Calu3 (cell line): ENCODE measurements at regions of chr10 and their contacts with region 1.

Region 1: DNA sequence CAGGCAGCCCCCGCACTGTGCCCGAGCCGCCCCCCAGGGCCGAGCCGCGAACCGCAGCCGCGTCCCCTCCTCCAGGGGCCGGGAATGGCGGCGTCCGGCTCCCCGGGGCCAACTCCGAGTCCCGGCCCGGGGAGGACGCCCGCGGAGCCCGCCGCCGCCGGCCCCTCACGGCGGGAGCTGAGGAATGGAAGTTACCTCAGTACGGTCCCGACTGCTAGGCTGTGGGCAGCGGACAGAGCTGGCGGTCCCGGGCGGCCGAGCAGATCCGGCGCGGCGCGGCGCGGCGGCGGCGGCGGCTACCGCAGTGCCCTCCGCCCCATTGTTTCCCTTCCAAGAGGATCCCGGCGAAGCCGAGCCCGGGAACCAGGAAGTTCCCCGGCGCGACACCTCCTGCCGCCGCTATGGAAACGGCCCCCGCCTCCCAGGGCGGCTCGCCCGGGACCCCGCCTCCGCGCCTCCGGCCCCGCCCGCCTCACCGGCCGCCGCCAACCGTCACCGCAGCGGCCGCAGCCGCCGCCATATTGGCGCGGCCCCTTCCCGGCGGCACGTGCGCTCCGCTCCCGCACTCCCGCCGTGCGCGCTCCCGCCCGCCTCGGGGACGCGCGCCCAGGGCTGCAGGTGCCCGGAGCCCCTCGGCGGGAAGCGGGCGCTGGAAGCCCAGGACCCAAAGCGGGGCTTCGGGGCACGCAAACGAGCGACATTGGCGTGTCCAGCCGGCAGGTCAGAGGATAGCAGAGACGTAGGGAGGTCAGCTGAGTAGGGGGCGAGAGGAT is at the start of gene USP6NL:
- DNase-seq: peak; percentile 96
- H3K4me3 Mint-ChIP-seq: peak within 1 kb of the TSS; percentile 78
- H3K27ac Mint-ChIP-seq: peak within 1 kb of the TSS; percentile 86
- H3K4me1 Mint-ChIP-seq: peaks cover 17% of the 10 kb centered on the region
- H3K27me3 Mint-ChIP-seq: no peaks in the 10 kb centered on the region
- CTCF ChIP-seq: no peak
- total RNA-seq, gene USP6NL: 25.3 and 27.5 TPM in 2 replicates

Region 2: DNA sequence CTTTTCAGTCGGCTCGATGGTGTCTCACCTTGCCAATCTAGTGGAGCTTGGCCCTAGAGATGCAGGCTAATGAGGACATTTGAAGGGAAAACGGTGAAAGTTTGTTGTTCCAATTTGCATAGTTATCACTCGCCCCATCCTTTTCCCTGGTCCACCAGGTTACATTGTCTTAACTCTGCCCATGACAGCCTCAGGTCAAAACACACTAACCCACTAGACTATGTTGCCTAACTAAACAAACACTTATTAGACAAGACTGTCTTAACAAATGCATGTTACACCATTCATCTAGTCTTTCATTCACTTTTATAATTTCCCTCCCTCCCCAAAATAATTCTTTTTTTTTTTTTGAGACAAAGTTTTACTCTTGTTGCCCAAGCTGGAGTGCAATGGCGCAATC is 40.7 kb before region 1 on chr10:
- CTCF ChIA-PET with region 1: no interaction called
- intact Hi-C with region 1: no loop called
- DNase-seq: no peak
- H3K4me3 Mint-ChIP-seq: no peak overlapping the region
- H3K27ac Mint-ChIP-seq: no peak overlapping the region
- H3K4me1 Mint-ChIP-seq: peaks cover 57% of the 10 kb centered on the region
- H3K27me3 Mint-ChIP-seq: no peaks in the 10 kb centered on the region
- CTCF ChIP-seq: no peak

Region 3: GRCh38 chr10:11587722-11588272 is 23.6 kb before region 1 on chr10:
- CTCF ChIA-PET with region 1: no interaction called
- intact Hi-C with region 1: loop called (anchors 1 kb)
- DNase-seq: peak; percentile 62
- H3K4me3 Mint-ChIP-seq: no peak overlapping the region
- H3K27ac Mint-ChIP-seq: peak overlapping the region; percentile 80
- H3K4me1 Mint-ChIP-seq: peaks cover 34% of the 10 kb centered on the region
- H3K27me3 Mint-ChIP-seq: no peaks in the 10 kb centered on the region
- CTCF ChIP-seq: no peak